Activated B cell treated with CpG ODN at 0.5 μM for 24 hours (primary cell): ENCODE measurements at regions of chr6 and their contacts with region 1.

Region 1: GRCh38 chr6:122471107-122472021 is at the start of gene SERINC1:
- DNase-seq: peak; percentile 83
- ATAC-seq: peak; percentile 95
- H3K4me3 Mint-ChIP-seq: peak within 1 kb of the TSS; percentile 99
- H3K27ac Mint-ChIP-seq: peak within 1 kb of the TSS; percentile 99
- H3K4me1 Mint-ChIP-seq: peaks cover 48% of the 10 kb centered on the region
- H3K27me3 Mint-ChIP-seq: no peaks in the 10 kb centered on the region
- CTCF ChIP-seq: no peak
- total RNA-seq, gene SERINC1: 51.3 and 52.0 TPM in 2 replicates

Region 2: DNA sequence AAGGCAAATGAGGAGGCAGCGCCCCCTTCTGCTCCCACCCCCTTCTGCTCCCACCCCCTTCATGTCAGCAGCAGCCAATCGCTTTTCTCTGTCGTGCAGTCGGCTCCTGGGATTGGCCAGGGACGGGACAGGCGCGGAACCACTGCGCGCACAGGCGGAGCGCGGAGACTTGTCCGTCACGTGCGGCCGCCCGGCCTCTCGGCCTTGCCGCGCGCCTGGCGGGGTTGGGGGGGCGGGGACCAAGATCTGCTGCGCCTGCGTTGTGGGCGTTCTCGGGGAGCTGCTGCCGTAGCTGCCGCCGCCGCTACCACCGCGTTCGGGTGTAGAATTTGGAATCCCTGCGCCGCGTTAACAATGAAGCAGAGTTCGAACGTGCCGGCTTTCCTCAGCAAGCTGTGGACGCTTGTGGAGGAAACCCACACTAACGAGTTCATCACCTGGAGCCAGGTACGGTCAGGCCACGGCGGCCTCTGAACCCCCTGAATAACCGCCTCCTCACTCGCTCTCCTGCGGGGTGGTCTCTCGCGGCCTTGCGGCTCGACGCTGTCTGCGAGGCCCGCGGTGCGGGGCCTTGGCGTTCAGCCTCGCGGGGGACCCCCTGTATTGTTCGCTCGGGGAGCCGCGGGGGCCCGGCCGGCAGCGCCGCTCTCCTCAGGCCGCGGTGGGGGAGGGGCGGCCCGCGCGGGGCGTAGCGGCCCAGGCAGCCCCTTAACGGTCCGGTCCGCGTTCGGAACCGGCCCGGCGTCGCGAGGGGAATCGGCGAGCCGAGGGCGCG is 71.8 kb before region 1 on chr6 and contains the start of gene HSF2:
- CTCF ChIA-PET with region 1: interaction called, 3 read pairs
- POLR2A ChIA-PET with region 1: interaction called, 16 read pairs
- intact Hi-C with region 1: loop called (anchors 1 kb)
- DNase-seq: peak; percentile 80
- ATAC-seq: peak; percentile 98
- H3K4me3 Mint-ChIP-seq: peak within 1 kb of the TSS; percentile 95
- H3K27ac Mint-ChIP-seq: peak within 1 kb of the TSS; percentile 88
- H3K4me1 Mint-ChIP-seq: peaks cover 23% of the 10 kb centered on the region
- H3K27me3 Mint-ChIP-seq: no peaks in the 10 kb centered on the region
- CTCF ChIP-seq: no peak
- total RNA-seq, gene HSF2: 9.0 and 9.3 TPM in 2 replicates

Region 3: GRCh38 chr6:122416825-122417224 is 54.5 kb before region 1 on chr6:
- CTCF ChIA-PET with region 1: no interaction called
- POLR2A ChIA-PET with region 1: no interaction called
- intact Hi-C with region 1: no loop called
- DNase-seq: no peak
- ATAC-seq: no peak
- H3K4me3 Mint-ChIP-seq: no peak overlapping the region
- H3K27ac Mint-ChIP-seq: no peak overlapping the region
- H3K4me1 Mint-ChIP-seq: no peaks in the 10 kb centered on the region
- H3K27me3 Mint-ChIP-seq: no peaks in the 10 kb centered on the region
- CTCF ChIP-seq: no peak

Region 4: GRCh38 chr6:122484760-122485159 is 13.4 kb after region 1 on chr6:
- CTCF ChIA-PET with region 1: no interaction called
- POLR2A ChIA-PET with region 1: interaction called, 11 read pairs
- intact Hi-C with region 1: loop called (anchors 1 kb)
- DNase-seq: no peak
- ATAC-seq: peak; percentile 87
- H3K4me3 Mint-ChIP-seq: no peak overlapping the region
- H3K27ac Mint-ChIP-seq: peak overlapping the region; percentile 27
- H3K4me1 Mint-ChIP-seq: peaks cover 6% of the 10 kb centered on the region
- H3K27me3 Mint-ChIP-seq: no peaks in the 10 kb centered on the region
- CTCF ChIP-seq: no peak

Region 5: GRCh38 chr6:122730775-122731386 is 259.5 kb after region 1 on chr6:
- CTCF ChIA-PET with region 1: no interaction called
- POLR2A ChIA-PET with region 1: no interaction called
- intact Hi-C with region 1: loop called (anchors 5 kb)
- DNase-seq: no peak
- ATAC-seq: no peak
- H3K4me3 Mint-ChIP-seq: no peak overlapping the region
- H3K27ac Mint-ChIP-seq: no peak overlapping the region
- H3K4me1 Mint-ChIP-seq: no peaks in the 10 kb centered on the region
- H3K27me3 Mint-ChIP-seq: peaks cover 5% of the 10 kb centered on the region
- CTCF ChIP-seq: peak; percentile 51

Region 6: DNA sequence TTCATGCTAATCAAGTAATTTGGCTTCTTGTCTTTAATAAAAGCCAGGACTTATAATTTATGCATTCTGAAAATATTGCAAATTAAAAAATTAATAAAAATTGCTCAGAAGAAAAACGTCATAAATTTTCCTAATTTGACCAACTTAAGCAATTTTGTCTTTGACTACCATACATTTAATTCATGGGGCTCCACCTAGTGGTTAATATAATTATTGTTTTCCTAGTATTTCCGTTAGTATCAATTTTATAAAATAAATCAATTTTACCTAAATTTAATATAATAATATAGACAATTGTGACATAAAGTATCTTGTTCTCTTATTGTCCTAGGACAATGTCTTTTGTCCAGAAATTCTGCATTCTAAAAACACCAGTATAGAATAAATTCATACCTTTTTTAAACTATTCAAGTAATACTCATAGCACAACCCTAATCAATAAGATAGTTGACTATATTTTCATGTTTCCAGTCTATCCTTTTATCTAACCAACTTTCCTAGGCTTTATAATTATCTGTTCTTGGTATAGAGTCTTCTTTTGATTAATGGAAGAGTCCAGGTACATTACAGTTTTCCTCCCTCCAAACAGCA is 845.5 kb after region 1 on chr6:
- CTCF ChIA-PET with region 1: no interaction called
- POLR2A ChIA-PET with region 1: no interaction called
- intact Hi-C with region 1: loop called (anchors 1 kb)
- DNase-seq: no peak
- ATAC-seq: no peak
- H3K4me3 Mint-ChIP-seq: no peak overlapping the region
- H3K27ac Mint-ChIP-seq: no peak overlapping the region
- H3K4me1 Mint-ChIP-seq: no peaks in the 10 kb centered on the region
- H3K27me3 Mint-ChIP-seq: no peaks in the 10 kb centered on the region
- CTCF ChIP-seq: no peak